Adrenal gland (tissue), 19 donors: ENCODE measurements at regions of chr16 and their contacts with region 1.

Region 1: DNA sequence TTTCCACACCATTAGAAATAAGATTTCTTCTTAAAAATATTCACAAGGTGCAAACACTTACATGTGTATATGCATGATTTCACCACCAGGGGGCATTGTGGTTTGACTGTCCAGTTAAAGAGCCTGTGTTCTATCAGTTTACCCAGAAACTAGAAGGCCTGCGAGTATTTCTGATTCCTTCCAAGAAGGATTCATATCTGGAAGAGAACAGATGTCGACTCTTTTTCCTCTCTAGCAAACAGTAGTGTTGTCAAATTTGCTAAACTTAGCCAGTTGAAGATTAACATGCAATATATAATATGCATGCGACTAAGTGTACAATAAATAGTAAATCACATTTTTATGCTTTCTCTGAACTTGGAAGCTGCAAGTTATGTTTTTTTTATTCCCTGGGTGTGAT is 404.1 kb downstream of the WWOX start:
- DNase-seq: peak; percentile 50 to 82 (median 61)
- H3K4me3 ChIP-seq: no peak overlapping the region
- H3K27ac ChIP-seq: no peak overlapping the region
- H3K4me1 ChIP-seq: no peaks in the 10 kb centered on the region
- H3K27me3 ChIP-seq: no peaks in the 10 kb centered on the region
- CTCF ChIP-seq: peak; percentile 78 to 97 (median 89)
- POLR2A ChIP-seq: no peak

Region 2: GRCh38 chr16:78576941-78577340 is 73.3 kb after region 1 on chr16:
- intact Hi-C with region 1: no loop called
- DNase-seq: no peak
- H3K4me3 ChIP-seq: no peak overlapping the region
- H3K27ac ChIP-seq: no peak overlapping the region
- H3K4me1 ChIP-seq: no peaks in the 10 kb centered on the region
- H3K27me3 ChIP-seq: no peaks in the 10 kb centered on the region
- CTCF ChIP-seq: no peak
- POLR2A ChIP-seq: no peak

Region 3: GRCh38 chr16:78761427-78761826 is 257.8 kb after region 1 on chr16:
- intact Hi-C with region 1: loop called (anchors 5 to 10 kb)
- DNase-seq: no peak
- H3K4me3 ChIP-seq: no peak overlapping the region
- H3K27ac ChIP-seq: no peak overlapping the region
- H3K4me1 ChIP-seq: no peaks in the 10 kb centered on the region
- H3K27me3 ChIP-seq: no peaks in the 10 kb centered on the region
- CTCF ChIP-seq: no peak
- POLR2A ChIP-seq: no peak

Region 4: GRCh38 chr16:78768718-78769117 is 265.1 kb after region 1 on chr16:
- intact Hi-C with region 1: loop called (anchors 5 to 10 kb)
- DNase-seq: no peak
- H3K4me3 ChIP-seq: no peak overlapping the region
- H3K27ac ChIP-seq: no peak overlapping the region
- H3K4me1 ChIP-seq: no peaks in the 10 kb centered on the region
- H3K27me3 ChIP-seq: no peaks in the 10 kb centered on the region
- CTCF ChIP-seq: no peak
- POLR2A ChIP-seq: no peak

Region 5: DNA sequence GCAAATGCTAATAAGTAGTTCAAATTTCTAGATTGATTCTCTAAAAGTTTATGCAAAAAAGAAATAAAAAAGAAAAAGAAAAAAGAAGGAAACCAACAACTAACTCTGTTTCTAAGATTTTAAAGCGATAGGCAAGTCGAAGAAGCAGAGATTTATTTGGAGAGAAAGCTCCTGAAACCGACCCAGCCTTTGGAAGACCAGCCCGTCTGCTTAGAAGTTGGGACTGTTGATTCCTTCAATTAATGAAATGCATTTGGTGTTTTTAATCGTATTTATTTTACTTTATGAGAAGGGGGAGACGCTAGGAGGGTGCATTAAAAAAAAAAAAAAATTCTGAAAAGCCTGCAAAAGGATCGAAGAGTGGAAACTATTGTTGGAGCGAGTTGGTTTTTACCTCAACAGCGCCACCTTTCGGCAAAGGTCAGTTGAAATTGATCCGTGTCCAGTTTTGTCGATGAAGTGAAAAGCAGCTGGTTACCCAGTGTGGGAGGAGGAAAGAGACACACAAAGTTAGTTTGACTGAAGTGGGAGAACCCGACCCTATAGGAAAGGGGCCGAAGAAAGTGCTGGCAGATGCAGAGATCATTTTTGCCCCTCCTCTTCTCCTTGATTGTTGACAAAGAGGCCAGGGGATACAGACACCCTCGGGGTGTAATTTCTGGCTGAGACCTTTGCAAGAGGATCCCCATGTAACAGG is 1098.5 kb after region 1 on chr16:
- intact Hi-C with region 1: loop called in 1 of 2 experiments (anchors 10 kb)
- DNase-seq: peak; percentile 79 to 94 (median 84)
- H3K4me3 ChIP-seq: peak overlapping the region in 3 of 4 donors; percentile 63 to 95 (median 91)
- H3K27ac ChIP-seq: peak overlapping the region; percentile 73 to 96 (median 95)
- H3K4me1 ChIP-seq: peaks cover 0 to 7% of the 10 kb centered on the region in 2 donors
- H3K27me3 ChIP-seq: no peaks in the 10 kb centered on the region
- CTCF ChIP-seq: peak; percentile 73 to 86 (median 81)
- POLR2A ChIP-seq: no peak